ENCODE measurements at regions of chr19 and their contacts with region 1.

Region 1: GRCh38 chr19:10388957-10389356 is 8.6 kb upstream of the TYK2 start:
- DNase-seq: peak; percentile 86
- ATAC-seq: peak; percentile 42
- H3K4me3 Mint-ChIP-seq: no peak overlapping the region
- H3K27ac Mint-ChIP-seq: no peak overlapping the region
- H3K4me1 Mint-ChIP-seq: peaks cover 6% of the 10 kb centered on the region
- H3K27me3 Mint-ChIP-seq: no peaks in the 10 kb centered on the region

Region 2: DNA sequence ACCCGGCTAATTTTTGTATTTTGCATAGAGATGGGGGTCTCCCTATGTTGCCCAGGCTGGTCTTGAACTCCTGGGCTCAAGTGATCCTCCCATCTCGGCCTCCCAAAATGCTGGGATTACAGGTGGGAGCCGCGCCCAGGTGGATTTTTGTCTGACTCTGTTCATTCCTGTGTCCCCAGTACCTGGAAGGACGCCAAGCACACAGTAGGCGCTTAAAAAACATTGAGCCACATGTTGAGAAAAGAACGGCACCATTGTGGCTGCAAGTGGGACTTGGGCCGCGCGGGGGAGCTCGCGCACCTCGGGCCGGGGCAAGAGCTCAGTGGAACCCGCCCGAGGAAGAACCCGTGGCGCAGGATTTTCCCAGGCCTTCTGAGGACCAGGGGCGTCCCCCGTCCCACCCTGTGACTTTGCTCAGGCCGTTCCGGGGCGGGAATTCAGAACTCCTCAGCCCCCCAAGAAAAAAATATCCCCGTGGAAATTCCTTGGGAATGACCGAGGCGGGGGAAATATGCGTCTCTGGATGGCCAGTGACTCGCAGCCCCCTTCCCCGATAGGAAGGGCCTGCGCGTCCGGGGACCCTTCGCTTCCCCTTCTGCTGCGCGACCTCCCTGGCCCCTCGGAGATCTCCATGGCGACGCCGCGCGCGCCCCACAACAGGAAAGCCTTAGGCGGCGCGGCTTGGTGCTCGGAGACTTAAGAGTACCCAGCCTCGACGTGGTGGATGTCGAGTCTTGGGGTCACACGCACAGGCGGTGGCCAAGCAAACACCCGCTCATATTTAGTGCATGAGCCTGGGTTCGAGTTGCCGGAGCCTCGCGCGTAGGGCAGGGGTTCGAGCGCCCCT is 119.4 kb before region 1 on chr19:
- CTCF ChIA-PET with region 1: interaction called, 383 read pairs
- POLR2A ChIA-PET with region 1: interaction called, 27 read pairs
- DNase-seq: peak; percentile 92
- ATAC-seq: peak; percentile 69
- H3K4me3 Mint-ChIP-seq: peak overlapping the region; percentile 82
- H3K27ac Mint-ChIP-seq: peak overlapping the region; percentile 93
- H3K4me1 Mint-ChIP-seq: peaks cover 35% of the 10 kb centered on the region
- H3K27me3 Mint-ChIP-seq: no peaks in the 10 kb centered on the region

Region 3: GRCh38 chr19:10292206-10292788 is 96.7 kb before region 1 on chr19:
- CTCF ChIA-PET with region 1: interaction called, 13 read pairs
- POLR2A ChIA-PET with region 1: interaction called, 5 read pairs
- DNase-seq: peak; percentile 81
- ATAC-seq: peak; percentile 28
- H3K4me3 Mint-ChIP-seq: peak overlapping the region; percentile 73
- H3K27ac Mint-ChIP-seq: peak overlapping the region; percentile 70
- H3K4me1 Mint-ChIP-seq: peaks cover 81% of the 10 kb centered on the region
- H3K27me3 Mint-ChIP-seq: peaks cover 77% of the 10 kb centered on the region

Region 4: DNA sequence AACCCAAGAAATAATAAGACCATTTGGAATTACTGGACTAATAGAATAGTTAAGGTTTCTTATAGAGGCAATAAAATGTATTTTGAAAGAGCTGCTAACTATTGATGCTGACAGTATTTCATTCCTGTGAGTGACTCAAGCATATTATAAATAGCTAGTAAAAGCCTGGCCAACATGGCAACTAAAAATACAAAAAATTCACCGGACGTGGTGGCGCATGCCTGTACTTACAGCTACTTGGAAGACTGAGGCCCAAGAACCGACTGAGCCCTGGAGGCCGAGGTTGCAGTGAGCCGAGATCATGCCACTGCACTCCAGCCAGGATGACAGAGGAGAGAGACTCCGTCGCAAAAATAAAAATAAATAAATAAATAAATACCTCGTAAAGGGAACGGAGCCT is 44.2 kb before region 1 on chr19:
- CTCF ChIA-PET with region 1: interaction called, 17 read pairs
- POLR2A ChIA-PET with region 1: interaction called, 3 read pairs
- DNase-seq: no peak
- ATAC-seq: no peak
- H3K4me3 Mint-ChIP-seq: no peak overlapping the region
- H3K27ac Mint-ChIP-seq: no peak overlapping the region
- H3K4me1 Mint-ChIP-seq: peaks cover 10% of the 10 kb centered on the region
- H3K27me3 Mint-ChIP-seq: no peaks in the 10 kb centered on the region

Region 5: GRCh38 chr19:10361569-10362011 is 27.4 kb before region 1 on chr19:
- CTCF ChIA-PET with region 1: no interaction called
- POLR2A ChIA-PET with region 1: no interaction called
- DNase-seq: no peak
- ATAC-seq: no peak
- H3K4me3 Mint-ChIP-seq: no peak overlapping the region
- H3K27ac Mint-ChIP-seq: no peak overlapping the region
- H3K4me1 Mint-ChIP-seq: no peaks in the 10 kb centered on the region
- H3K27me3 Mint-ChIP-seq: no peaks in the 10 kb centered on the region

Region 6: DNA sequence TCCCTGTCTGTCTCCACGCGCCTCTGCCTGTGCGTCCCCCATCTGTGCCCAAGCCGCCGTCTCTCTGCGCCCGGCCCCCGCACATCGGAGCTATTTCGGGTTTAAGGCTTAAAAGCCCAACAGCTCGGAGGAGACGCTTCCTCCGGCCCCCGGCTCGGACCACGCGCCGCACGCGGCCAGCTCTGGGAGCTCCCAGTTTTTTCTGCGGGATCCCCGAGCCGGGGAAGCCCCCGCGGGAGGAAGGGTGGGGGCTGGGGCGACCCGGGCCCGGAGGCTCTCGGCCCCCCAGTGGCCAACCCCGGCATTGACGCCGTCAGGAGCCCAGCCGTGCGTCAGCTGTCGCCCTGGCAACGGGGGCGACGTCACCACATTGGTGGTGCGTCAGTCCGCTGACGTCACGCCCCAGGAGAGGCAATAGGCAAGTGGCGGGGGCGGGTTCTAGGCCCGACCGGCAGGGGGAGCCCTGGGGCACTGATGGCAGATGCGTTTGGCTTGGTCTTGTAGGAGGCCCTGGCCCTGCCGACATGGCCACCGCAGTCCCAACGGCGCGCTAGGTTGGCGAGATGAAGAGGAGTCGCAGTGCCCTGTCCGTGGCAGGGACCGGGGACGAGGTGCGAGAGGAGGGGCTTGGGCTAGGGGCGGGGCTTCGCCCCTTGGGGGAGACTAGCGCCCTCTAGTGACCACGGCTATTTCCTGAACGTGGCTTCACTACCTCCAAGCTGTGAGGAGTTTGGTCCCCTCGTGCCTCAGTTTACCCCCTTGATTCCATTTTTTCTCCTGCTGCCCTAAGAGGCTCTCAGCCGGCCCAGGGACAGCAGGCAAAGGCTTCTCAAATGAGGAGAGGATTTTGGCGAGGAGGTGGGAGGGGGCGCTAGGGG is 27.7 kb after region 1 on chr19:
- CTCF ChIA-PET with region 1: interaction called, 12 read pairs
- POLR2A ChIA-PET with region 1: no interaction called
- DNase-seq: peak; percentile 96
- ATAC-seq: peak; percentile 45
- H3K4me3 Mint-ChIP-seq: peak overlapping the region; percentile 75
- H3K27ac Mint-ChIP-seq: peak overlapping the region; percentile 92
- H3K4me1 Mint-ChIP-seq: peaks cover 66% of the 10 kb centered on the region
- H3K27me3 Mint-ChIP-seq: no peaks in the 10 kb centered on the region

Region 7: DNA sequence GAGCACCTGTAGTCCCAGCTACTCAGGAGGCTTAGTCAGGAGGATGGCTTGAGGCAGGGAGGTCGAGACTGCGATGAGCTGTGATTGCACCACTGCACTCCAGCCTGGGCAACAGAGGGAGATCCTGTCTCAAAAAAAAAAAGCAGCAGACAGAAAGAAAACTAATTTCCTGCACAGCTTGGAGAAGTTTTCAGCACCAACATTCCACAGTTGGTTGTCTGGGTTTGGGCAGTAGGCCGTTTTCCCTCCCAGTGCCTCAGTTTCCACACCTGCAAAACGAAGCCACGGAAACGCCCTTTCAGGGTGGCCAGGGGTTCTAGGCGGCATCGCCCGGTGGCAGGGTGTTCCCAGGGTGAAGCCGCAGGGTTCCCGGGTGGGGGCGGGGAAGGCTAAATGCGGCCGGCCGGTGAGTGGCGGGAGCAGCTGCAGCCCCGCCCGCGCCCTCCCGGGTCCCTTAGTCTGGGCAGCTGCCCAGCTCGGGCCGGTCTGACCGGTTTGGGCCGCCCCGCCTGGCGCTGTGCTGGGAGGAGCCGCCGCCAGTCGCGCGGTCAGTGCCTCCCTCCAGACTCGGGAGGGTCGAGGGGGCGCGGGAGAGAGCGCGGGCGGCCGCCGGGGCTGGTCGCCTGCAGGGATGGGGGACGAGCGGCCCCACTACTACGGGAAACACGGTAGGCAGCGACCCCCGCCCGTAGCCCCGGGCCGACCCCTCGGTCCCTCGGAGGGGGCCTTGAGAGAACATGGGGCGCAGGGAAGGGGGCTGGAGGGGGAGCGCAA is 236.2 kb after region 1 on chr19 and contains the start of gene SLC44A2:
- CTCF ChIA-PET with region 1: no interaction called
- POLR2A ChIA-PET with region 1: no interaction called
- DNase-seq: no peak
- ATAC-seq: no peak
- H3K4me3 Mint-ChIP-seq: peak within 1 kb of the TSS; percentile 34
- H3K27ac Mint-ChIP-seq: peak within 1 kb of the TSS; percentile 89
- H3K4me1 Mint-ChIP-seq: peaks cover 40% of the 10 kb centered on the region
- H3K27me3 Mint-ChIP-seq: no peaks in the 10 kb centered on the region
- total RNA-seq, gene SLC44A2: 112 to 121 TPM

Measured in activated CD8-positive, alpha-beta T cell treated with anti-CD3 and anti-CD28 coated beads, Interleukin-2, amount 10 ng/mL, durations not matched to agents 7 days and 5 days (primary cell).